GM10248 (cell line): ENCODE measurements at regions of chr3 and their contacts with region 1.

Region 1: DNA sequence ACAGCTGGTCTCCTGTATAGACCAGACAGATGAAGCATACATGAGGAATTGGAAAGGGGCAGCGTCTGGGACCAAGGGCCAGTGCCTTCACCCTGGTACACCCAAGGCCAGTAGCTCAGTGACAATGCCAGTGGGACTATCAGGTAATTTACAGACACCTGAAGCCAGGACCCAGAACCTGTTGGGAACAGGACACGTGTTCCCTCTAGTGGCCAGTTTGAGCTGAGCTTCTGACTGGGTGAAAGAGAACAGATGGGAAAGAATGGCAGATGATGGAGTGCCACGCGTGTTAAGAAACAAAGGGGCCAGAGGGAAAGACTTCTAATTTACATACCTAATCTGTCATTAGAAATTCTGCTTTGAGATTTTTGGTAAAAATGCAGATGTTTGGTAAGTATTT is 5.1 kb upstream of the SLC25A38 start:
- DNase-seq: peak; percentile 70
- CTCF ChIP-seq: peak; percentile 89

Region 2: GRCh38 chr3:39295184-39295775 is 82.8 kb before region 1 on chr3:
- CTCF ChIA-PET with region 1: interaction called, 137 read pairs
- POLR2A ChIA-PET with region 1: no interaction called
- DNase-seq: peak; percentile 69
- CTCF ChIP-seq: no peak

Region 3: DNA sequence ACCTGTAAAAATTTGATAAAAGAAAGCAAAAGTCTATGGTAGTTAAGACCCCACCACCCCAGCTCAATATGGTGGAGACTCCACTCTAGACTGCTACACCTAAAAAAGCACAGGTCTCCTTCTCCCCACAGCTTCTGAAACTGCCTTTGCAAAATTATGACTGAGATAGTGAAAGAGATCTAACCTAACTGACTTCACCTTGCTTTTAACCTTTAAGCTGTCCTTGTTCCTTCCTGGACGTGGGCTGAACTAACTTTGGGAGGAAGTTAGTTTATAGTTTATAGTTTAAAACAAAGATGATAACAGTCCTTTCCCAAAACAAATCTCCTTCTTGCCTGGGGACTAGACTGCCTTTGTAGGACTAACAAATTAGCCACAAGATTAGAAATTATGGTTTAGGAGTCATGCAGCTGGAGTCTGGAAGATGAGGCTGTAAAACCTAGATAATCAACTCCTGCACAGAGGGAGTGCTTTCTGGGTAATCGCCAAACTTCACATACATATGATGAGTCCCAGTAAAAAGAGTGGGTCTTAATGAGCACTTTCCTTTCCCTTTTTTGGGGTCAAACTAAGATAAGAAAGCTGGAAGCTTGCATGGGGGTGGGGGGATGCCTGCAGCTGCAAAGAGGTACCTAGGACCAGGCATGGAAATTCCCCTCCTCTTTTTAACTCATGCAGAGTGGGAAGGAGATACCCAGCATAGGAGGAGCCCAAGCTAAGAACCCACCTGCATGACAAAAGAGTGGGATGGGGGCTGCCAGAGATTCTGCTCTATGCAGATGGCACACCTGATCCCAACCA is 31.1 kb before region 1 on chr3:
- CTCF ChIA-PET with region 1: interaction called, 15 read pairs
- POLR2A ChIA-PET with region 1: no interaction called
- DNase-seq: no peak
- CTCF ChIP-seq: no peak

Region 4: DNA sequence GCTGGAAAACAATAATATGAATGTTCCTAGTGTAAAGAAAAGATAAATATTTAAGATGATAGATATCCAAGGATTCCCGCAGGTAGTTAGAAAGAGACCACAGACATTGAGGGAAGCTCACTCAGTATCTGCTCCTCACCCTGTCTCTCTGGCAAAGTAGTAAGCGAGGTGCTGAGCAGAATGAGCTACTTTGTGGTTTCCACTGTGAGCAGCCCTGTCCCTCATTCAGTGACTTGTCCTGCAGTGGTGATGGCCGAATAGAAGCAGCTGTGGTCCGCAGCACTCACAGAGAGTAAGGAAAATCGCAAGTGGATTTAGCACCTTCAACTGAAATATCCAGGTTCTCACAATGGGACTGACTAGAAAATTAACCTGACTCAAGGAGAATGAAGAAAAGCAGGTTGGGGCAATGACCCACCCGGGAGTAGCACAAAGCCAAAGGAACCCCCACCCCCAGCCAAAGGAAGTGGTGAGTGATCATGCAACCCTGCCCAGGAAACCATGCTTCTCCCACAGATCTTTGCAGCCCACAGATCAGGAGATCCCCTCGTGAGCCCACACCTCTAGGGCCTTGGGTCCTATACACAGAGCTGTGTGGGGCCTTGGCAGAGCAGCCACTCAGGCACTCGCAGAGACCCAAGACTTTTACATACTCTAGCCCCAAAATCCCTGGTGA is 16.7 kb before region 1 on chr3:
- CTCF ChIA-PET with region 1: interaction called, 12 read pairs
- POLR2A ChIA-PET with region 1: no interaction called
- DNase-seq: no peak
- CTCF ChIP-seq: no peak

Region 5: DNA sequence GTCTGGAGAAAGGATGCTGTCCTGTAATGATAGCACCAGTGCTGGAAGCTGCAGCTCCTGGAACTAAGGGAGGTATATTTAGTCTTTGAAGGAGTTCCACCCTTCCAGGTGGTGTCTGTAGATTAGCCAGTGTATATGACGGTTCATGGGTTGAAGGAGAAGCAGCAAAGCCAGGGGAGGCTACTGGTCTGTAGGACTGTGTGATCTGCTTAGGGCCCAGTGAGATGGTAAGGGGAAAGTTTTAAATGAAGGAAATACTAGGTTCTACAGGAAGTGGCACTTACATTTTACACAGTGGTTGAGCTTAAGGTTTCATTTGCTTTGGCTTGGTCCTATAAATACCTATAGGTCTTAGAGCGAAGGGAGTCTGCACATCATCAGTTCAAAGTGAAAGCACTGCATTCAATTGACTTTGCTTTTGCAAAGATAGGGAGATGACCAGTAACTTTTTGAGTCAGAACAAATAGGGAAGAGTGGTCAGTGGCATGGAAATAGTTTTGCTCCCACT is 10.7 kb after region 1 on chr3:
- CTCF ChIA-PET with region 1: interaction called, 19 read pairs
- POLR2A ChIA-PET with region 1: interaction called, 6 read pairs
- DNase-seq: peak; percentile 73
- CTCF ChIP-seq: no peak

Region 6: DNA sequence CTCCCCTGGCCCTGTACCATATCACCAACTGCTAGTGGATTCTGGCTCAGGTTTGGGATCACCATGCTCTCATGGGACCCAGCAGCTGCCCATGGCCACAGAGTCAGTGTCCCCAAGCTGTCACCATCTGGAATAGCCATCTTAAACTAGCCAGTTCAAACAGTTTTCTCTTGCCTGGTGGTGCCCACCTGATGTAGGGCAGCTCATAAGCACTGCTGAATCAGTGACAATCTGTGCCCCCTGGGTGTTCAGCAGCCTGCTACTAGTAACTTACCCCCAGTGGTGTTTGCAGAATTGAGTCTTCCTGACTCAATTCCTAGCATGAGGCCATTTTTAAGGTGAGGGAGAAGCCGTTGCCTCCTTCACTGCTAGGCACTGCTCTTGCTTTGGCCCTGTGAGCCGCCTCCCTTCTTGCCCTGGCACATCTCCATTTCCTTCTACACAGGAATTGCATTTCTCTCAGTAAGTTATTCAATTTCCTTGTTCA is 36.4 kb after region 1 on chr3:
- CTCF ChIA-PET with region 1: no interaction called
- POLR2A ChIA-PET with region 1: no interaction called
- DNase-seq: no peak
- CTCF ChIP-seq: no peak